ENCODE measurements at regions of chr17 and their contacts with region 1.

Region 1: DNA sequence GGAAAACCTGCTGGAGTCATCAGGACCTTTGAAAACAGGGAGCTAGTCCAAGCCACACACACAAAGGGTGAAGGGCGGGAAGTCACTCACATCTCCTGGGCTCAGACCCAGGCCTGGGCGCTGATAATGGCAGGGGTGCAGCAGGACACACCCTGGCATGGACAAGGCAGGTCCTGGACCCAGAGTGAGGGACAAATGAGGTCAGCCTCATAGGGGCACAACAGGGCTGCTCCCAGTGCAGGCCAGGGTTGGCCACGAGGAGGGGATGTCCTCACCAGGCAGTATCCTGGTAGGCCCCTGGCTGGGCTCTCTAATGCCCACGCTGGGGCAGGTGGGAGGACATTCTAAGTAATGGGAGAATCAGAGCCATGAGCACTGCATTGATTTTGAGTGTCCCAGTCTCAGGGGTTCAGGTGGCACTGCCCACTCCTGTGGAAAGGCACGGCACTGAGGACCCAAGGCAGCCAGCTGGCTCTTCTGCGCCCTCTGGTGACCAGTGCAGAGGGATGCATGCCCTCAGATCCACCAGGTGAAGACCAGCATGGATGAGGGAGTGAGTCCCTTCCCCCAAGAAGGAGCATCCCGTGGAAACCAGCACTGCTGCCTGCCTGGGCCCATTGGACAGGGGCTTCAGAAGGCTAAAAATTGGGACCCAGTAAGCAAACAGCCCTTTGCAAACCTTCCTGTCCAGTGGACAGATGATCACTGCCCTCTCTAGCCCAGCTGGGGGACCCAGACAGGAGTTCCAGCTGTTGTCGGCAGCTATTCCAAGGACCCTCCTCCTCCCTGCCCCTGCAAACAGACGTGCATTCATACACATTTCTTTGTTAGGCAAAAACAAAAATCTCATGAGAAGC is 23.4 kb upstream of the SREBF1 start:
- DNase-seq: peak; percentile 70
- H3K4me3 Mint-ChIP-seq: no peak overlapping the region
- H3K27ac Mint-ChIP-seq: no peak overlapping the region
- H3K4me1 Mint-ChIP-seq: peaks cover 5% of the 10 kb centered on the region
- H3K27me3 Mint-ChIP-seq: no peaks in the 10 kb centered on the region
- CTCF ChIP-seq: peak; percentile 94

Region 2: GRCh38 chr17:17766077-17766743 is 93.9 kb before region 1 on chr17:
- CTCF ChIA-PET with region 1: no interaction called
- POLR2A ChIA-PET with region 1: no interaction called
- intact Hi-C with region 1: no loop called
- DNase-seq: no peak
- H3K4me3 Mint-ChIP-seq: no peak overlapping the region
- H3K27ac Mint-ChIP-seq: no peak overlapping the region
- H3K4me1 Mint-ChIP-seq: peaks cover 22% of the 10 kb centered on the region
- H3K27me3 Mint-ChIP-seq: no peaks in the 10 kb centered on the region
- CTCF ChIP-seq: no peak

Region 3: GRCh38 chr17:17812211-17813057 is 47.7 kb before region 1 on chr17:
- CTCF ChIA-PET with region 1: interaction called, 92 read pairs
- POLR2A ChIA-PET with region 1: interaction called, 5 read pairs
- intact Hi-C with region 1: loop called (anchors 1 kb)
- DNase-seq: peak; percentile 62
- H3K4me3 Mint-ChIP-seq: no peak overlapping the region
- H3K27ac Mint-ChIP-seq: no peak overlapping the region
- H3K4me1 Mint-ChIP-seq: peaks cover 5% of the 10 kb centered on the region
- H3K27me3 Mint-ChIP-seq: no peaks in the 10 kb centered on the region
- CTCF ChIP-seq: peak; percentile 98

Region 4: DNA sequence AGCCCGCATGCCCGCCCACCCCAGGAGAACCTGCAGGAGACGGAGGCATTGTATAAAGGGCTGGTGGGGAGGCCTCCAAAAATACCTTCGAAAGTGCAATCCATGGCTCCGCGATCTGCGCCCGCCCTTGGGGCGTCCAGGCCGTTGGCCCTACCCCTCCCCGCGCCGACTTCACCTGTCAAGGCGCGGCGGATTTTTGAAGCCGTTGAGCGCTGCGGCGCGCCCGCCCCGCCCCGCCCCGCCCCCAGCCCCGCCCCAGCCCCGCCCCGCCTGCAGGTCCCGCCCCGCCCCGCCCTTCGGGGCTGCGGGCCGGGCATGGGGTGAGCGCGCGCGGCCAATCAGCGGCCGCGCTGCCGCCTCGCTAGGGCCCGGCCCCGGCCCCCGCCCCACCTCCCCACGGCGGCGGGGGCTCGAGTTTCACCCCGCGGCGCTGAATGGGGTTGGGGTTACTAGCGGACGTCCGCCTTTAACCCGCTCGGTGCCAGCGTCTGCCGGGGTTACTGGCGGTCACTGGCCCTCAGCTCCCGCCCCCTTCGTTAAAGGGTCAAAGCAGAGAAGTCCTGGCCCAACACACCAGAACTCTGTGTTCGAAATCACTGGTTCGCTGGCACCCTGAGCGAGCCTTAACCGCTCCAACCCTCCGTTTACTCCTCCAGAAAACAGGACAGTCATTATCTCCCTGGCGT is 36.6 kb before region 1 on chr17:
- CTCF ChIA-PET with region 1: interaction called, 20 read pairs
- POLR2A ChIA-PET with region 1: no interaction called
- intact Hi-C with region 1: no loop called
- DNase-seq: peak; percentile 91
- H3K4me3 Mint-ChIP-seq: peak overlapping the region; percentile 77
- H3K27ac Mint-ChIP-seq: peak overlapping the region; percentile 76
- H3K4me1 Mint-ChIP-seq: peaks cover 71% of the 10 kb centered on the region
- H3K27me3 Mint-ChIP-seq: no peaks in the 10 kb centered on the region
- CTCF ChIP-seq: no peak

Region 5: DNA sequence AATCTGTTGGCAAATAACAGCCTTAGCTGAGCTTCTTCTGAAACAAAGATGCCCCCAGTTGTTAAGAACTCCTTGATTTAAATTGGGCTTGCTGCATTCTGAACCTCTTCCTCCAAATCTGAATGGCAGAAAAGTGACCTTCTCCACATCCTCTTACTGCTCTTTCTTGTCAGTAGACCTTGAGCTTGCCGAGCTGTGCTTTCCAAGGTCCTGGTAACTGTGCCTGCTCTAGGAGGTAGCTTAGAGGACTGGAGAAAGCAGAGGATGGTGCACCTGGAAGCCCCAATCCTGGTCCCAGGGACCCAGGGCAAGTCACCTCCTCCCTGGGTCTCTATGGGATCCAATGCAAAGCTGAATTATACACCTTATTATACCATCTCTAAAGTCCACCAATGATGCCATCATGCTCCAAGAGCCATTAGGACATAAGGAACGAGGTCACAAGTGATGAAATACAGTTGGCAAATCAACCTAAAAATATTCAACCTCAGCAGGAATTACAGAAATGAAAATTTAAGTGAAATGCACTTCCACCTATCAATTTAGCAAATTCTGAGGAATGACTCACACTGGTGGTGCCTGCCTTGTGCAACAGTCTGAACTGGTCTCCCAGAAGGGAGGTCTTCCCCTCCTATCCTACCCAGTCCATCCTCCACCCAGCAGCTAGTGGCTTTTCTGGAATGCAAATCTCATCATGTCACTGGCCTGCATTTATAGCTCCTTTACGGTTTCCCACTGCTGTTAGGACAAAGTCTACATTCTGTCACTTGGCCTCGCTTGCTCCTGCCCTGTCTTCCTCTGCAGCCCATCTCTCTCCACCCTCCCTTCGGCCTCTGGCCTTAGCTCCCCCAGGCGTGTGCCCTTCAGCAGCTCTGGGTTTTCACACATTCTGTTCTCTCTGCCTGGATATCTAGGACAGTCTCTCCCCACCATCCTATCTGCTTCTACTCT is 75.5 kb after region 1 on chr17:
- CTCF ChIA-PET with region 1: no interaction called
- POLR2A ChIA-PET with region 1: no interaction called
- intact Hi-C with region 1: no loop called
- DNase-seq: peak; percentile 82
- H3K4me3 Mint-ChIP-seq: no peak overlapping the region
- H3K27ac Mint-ChIP-seq: peak overlapping the region; percentile 65
- H3K4me1 Mint-ChIP-seq: peaks cover 47% of the 10 kb centered on the region
- H3K27me3 Mint-ChIP-seq: no peaks in the 10 kb centered on the region
- CTCF ChIP-seq: no peak